Mammary epithelial cell (primary cell): ENCODE measurements at regions of chr11 and their contacts with region 1.

Region 1: GRCh38 chr11:71580057-71581003 is 2.3 kb downstream of the KRTAP5-11 start:
- DNase-seq: peak; percentile 54
- H3K4me3 ChIP-seq: no peak overlapping the region
- H3K27ac ChIP-seq: no peak overlapping the region
- H3K4me1 ChIP-seq: no peaks in the 10 kb centered on the region
- H3K27me3 ChIP-seq: no peaks in the 10 kb centered on the region
- CTCF ChIP-seq: peak; percentile 86 to 90

Region 2: GRCh38 chr11:71518506-71519471 is 61.5 kb before region 1 on chr11:
- CTCF ChIA-PET with region 1: no interaction called
- dilution Hi-C with region 1: no loop called
- in situ Hi-C with region 1: no loop called
- intact Hi-C with region 1: no loop called
- DNase-seq: no peak
- H3K4me3 ChIP-seq: no peak overlapping the region
- H3K27ac ChIP-seq: no peak overlapping the region
- H3K4me1 ChIP-seq: no peaks in the 10 kb centered on the region
- H3K27me3 ChIP-seq: no peaks in the 10 kb centered on the region
- CTCF ChIP-seq: no peak

Region 3: GRCh38 chr11:71556018-71556417 is 24.3 kb before region 1 on chr11:
- CTCF ChIA-PET with region 1: interaction called, 12 read pairs
- dilution Hi-C with region 1: no loop called
- in situ Hi-C with region 1: no loop called
- intact Hi-C with region 1: no loop called
- DNase-seq: no peak
- H3K4me3 ChIP-seq: no peak overlapping the region
- H3K27ac ChIP-seq: no peak overlapping the region
- H3K4me1 ChIP-seq: no peaks in the 10 kb centered on the region
- H3K27me3 ChIP-seq: no peaks in the 10 kb centered on the region
- CTCF ChIP-seq: no peak